ENCODE measurements at regions of chr2 and their contacts with region 1.

Region 1: DNA sequence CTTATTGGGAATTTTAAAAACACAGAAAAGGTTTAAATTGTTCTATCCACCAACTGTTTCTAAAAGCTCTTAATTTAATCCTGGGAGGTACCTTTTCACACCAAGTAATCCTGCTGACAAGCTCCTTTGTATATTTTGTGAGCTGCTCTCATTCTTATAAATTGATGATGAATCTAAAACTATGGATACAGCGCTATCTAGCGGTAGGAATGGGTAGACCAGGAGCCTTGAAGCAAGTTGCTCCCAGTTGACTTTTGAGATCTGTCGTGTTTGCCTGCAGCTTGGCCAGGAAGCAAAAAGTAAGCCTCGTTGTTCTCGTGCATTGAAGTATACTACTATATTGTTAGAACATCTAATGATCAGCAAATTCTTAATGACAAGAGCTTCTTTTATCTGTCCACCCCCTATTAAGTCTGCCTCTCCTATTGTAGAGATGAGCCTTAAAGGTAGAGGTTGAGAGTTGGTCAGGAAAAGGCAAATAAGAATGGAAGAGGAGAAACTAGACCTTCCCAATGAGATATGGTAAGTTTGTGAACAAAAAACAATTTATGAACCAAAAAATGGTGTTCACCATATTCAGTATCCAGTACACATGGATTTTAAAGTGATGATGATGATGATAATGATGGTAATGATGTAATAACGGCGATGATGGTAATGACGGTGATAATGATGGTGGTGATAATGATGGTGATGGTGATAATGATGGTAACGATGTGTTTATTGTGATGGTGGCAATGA is 212.0 kb upstream of the NCKAP5 start:
- DNase-seq: peak; percentile 50
- ATAC-seq: no peak
- H3K4me3 Mint-ChIP-seq: no peak overlapping the region
- H3K27ac Mint-ChIP-seq: no peak overlapping the region
- H3K4me1 Mint-ChIP-seq: no peaks in the 10 kb centered on the region
- H3K27me3 Mint-ChIP-seq: no peaks in the 10 kb centered on the region

Region 2: GRCh38 chr2:133517876-133518275 is 262.4 kb before region 1 on chr2:
- CTCF ChIA-PET with region 1: interaction called, 4 read pairs
- POLR2A ChIA-PET with region 1: no interaction called
- intact Hi-C with region 1: loop called in 1 of 2 experiments (anchors 2 kb)
- DNase-seq: no peak
- ATAC-seq: no peak
- H3K4me3 Mint-ChIP-seq: no peak overlapping the region
- H3K27ac Mint-ChIP-seq: no peak overlapping the region
- H3K4me1 Mint-ChIP-seq: no peaks in the 10 kb centered on the region
- H3K27me3 Mint-ChIP-seq: no peaks in the 10 kb centered on the region

Region 3: DNA sequence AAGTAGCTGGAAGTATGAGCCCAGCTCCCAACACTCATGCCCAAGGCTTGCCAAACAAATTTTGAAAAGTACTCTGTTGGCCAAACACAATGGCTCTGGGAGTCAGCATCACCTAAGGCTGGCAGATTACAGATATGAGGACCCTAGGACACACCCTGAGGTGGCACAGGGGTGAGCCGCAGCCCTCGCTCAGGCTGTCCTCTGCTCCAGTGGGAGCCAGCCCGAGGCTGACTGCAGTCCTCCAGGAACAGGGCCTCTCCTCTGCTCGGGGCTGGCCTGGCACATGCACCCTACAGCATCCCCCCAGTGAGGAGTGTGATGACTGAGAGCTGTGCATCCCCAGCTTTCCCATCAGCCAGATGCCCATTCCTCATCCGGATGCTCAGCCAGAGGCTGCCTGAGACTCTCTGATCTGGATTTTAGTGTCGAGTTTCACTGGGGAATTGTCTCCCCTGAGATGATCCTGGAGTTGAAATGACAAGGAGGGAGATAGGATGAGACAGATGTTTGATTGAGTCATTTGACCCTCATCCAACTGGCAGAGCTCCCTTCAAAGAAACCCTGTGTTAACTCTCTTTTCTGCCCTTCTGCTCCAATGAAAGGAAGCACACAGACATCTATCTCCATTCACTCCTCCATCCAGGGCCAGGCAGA is 57.3 kb after region 1 on chr2:
- CTCF ChIA-PET with region 1: no interaction called
- POLR2A ChIA-PET with region 1: no interaction called
- intact Hi-C with region 1: no loop called
- DNase-seq: no peak
- ATAC-seq: no peak
- H3K4me3 Mint-ChIP-seq: no peak overlapping the region
- H3K27ac Mint-ChIP-seq: no peak overlapping the region
- H3K4me1 Mint-ChIP-seq: no peaks in the 10 kb centered on the region
- H3K27me3 Mint-ChIP-seq: peaks cover 2% of the 10 kb centered on the region

Region 4: GRCh38 chr2:133855526-133855925 is 75.3 kb after region 1 on chr2:
- CTCF ChIA-PET with region 1: no interaction called
- POLR2A ChIA-PET with region 1: no interaction called
- intact Hi-C with region 1: no loop called
- DNase-seq: no peak
- ATAC-seq: no peak
- H3K4me3 Mint-ChIP-seq: no peak overlapping the region
- H3K27ac Mint-ChIP-seq: no peak overlapping the region
- H3K4me1 Mint-ChIP-seq: no peaks in the 10 kb centered on the region
- H3K27me3 Mint-ChIP-seq: peaks cover 2% of the 10 kb centered on the region

Region 5: GRCh38 chr2:133919285-133919684 is 139.0 kb after region 1 on chr2:
- CTCF ChIA-PET with region 1: no interaction called
- POLR2A ChIA-PET with region 1: no interaction called
- intact Hi-C with region 1: no loop called
- DNase-seq: no peak
- ATAC-seq: no peak
- H3K4me3 Mint-ChIP-seq: no peak overlapping the region
- H3K27ac Mint-ChIP-seq: no peak overlapping the region
- H3K4me1 Mint-ChIP-seq: no peaks in the 10 kb centered on the region
- H3K27me3 Mint-ChIP-seq: peaks cover 13% of the 10 kb centered on the region